ENCODE measurements at regions of chr1 and their contacts with region 1.

Region 1: GRCh38 chr1:20786253-20787028 is 666 bp downstream of the HP1BP3 start:
- DNase-seq: peak; percentile 89 to 98 (median 95)
- ATAC-seq: peak; percentile 73
- H3K4me3 ChIP-seq: peak overlapping the region; percentile 86 to 95
- H3K4me3 Mint-ChIP-seq: peak overlapping the region; percentile 99
- H3K27ac ChIP-seq: peak overlapping the region; percentile 81 to 88
- H3K27ac Mint-ChIP-seq: peak overlapping the region; percentile 98
- H3K4me1 ChIP-seq: peaks cover 32% of the 10 kb centered on the region
- H3K4me1 Mint-ChIP-seq: peaks cover 38% of the 10 kb centered on the region
- H3K27me3 ChIP-seq: no peaks in the 10 kb centered on the region
- H3K27me3 Mint-ChIP-seq: no peaks in the 10 kb centered on the region
- CTCF ChIP-seq: no peak

Region 2: DNA sequence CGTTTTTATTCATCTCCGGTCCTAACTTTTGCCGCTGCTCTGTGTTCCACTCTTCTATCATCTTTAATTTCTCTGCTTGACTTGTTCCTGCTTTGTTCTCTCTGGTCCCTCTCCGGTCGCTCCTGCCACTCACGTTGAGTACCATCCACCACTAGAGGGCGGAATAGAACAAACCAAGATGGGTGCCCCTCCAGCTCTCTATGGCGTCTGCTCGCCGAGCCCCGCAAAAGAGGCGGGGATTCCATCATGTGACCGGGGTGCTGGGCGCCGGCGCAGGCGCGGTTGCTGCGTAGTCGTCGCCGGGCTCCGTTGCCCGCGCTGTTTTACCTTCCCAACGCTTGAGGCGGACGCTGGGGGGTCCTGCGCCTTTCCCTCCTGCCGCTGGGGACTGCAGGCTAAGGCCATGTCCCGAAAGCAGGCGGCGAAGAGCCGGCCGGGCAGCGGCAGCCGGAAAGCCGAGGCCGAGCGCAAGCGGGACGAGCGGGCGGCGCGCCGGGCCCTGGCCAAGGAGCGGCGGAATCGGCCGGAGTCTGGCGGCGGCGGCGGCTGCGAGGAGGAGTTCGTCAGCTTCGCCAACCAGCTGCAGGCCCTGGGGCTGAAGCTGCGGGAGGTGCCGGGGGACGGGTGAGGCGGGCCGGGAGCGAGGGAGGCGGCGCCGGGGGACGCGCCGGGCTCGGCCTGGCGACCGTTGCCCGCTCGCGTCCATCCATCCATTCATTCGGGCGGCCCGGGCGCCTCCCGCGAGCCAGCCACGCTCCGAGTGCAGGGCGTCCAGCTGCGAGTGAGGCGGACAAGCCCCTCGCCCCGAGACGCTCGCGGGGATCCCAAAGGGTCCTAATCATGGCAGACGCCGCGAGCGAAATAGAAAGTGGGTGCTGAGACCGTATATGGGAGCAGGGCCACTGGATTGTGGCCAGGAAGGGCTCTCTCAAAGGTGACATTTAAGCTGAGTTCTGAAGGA is 904.0 kb before region 1 on chr1 and contains the start of gene OTUD3:
- CTCF ChIA-PET with region 1: no interaction called
- POLR2A ChIA-PET with region 1: no interaction called
- intact Hi-C with region 1: loop called in 1 of 2 experiments (anchors 10 kb)
- DNase-seq: peak; percentile 89 to 99 (median 95)
- ATAC-seq: peak; percentile 97
- H3K4me3 ChIP-seq: peak within 1 kb of the TSS; percentile 71 to 88
- H3K4me3 Mint-ChIP-seq: peak within 1 kb of the TSS; percentile 90
- H3K27ac ChIP-seq: peak within 1 kb of the TSS; percentile 67 to 77
- H3K27ac Mint-ChIP-seq: peak within 1 kb of the TSS; percentile 61
- H3K4me1 ChIP-seq: peaks cover 18% of the 10 kb centered on the region
- H3K4me1 Mint-ChIP-seq: peaks cover 43% of the 10 kb centered on the region
- H3K27me3 ChIP-seq: no peaks in the 10 kb centered on the region
- H3K27me3 Mint-ChIP-seq: no peaks in the 10 kb centered on the region
- CTCF ChIP-seq: peak; percentile 90
- total RNA-seq, gene OTUD3: 16.5 to 17.3 TPM

Region 3: DNA sequence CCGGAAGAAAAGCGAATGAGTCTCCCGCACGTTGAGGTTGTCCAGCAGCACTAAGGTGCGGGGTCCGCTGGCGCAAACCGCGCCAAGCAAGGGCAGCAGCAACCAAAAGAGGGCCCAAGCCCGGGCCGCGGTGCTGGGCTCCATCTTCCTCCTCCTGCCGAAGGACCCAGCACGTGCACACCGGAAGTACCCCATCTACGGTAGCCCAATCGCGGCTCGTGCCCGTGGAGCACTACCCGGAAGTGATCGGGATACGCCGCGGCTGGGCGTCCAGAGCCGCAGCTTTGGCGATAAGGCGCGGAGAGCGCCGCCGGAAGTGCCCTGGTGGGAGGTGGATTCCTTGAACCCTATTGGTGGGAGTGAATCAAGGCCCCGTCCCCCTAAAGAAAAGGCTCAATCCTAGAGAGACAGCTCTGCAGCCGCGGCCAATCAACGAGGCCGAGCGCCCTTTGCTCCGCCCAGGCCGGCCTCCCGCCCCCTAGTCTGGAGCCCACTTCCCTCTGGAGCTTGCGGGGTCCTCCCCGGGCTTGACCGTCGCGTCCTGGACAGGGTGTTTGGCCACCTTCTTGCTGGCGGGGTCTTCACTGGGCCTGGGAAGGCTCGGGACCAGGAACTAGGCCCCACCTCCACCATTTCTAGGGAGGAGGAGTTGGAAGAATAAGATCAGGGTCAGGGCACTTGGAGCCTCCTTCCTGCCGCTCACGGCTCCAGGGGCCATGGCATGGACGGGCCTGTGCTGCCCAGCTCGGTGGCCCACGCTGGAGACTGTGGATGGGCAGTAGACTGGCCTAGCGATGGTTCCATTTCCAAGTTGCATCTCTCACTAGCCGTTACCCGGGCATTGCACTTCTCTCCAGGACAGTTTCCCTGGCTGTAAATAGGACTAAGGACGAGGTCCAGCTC is 125.0 kb before region 1 on chr1 and contains the start of gene DDOST:
- CTCF ChIA-PET with region 1: no interaction called
- POLR2A ChIA-PET with region 1: no interaction called
- intact Hi-C with region 1: loop called (anchors 1 to 5 kb)
- DNase-seq: peak; percentile 86 to 98 (median 94)
- ATAC-seq: peak; percentile 94
- H3K4me3 ChIP-seq: peak within 1 kb of the TSS; percentile 85 to 95
- H3K4me3 Mint-ChIP-seq: peak within 1 kb of the TSS; percentile 98
- H3K27ac ChIP-seq: peak within 1 kb of the TSS; percentile 81 to 87
- H3K27ac Mint-ChIP-seq: peak within 1 kb of the TSS; percentile 98
- H3K4me1 ChIP-seq: peaks cover 28% of the 10 kb centered on the region
- H3K4me1 Mint-ChIP-seq: peaks cover 52% of the 10 kb centered on the region
- H3K27me3 ChIP-seq: no peaks in the 10 kb centered on the region
- H3K27me3 Mint-ChIP-seq: no peaks in the 10 kb centered on the region
- CTCF ChIP-seq: peak; percentile 27
- total RNA-seq, gene DDOST: 97.5 to 114 TPM

Region 4: DNA sequence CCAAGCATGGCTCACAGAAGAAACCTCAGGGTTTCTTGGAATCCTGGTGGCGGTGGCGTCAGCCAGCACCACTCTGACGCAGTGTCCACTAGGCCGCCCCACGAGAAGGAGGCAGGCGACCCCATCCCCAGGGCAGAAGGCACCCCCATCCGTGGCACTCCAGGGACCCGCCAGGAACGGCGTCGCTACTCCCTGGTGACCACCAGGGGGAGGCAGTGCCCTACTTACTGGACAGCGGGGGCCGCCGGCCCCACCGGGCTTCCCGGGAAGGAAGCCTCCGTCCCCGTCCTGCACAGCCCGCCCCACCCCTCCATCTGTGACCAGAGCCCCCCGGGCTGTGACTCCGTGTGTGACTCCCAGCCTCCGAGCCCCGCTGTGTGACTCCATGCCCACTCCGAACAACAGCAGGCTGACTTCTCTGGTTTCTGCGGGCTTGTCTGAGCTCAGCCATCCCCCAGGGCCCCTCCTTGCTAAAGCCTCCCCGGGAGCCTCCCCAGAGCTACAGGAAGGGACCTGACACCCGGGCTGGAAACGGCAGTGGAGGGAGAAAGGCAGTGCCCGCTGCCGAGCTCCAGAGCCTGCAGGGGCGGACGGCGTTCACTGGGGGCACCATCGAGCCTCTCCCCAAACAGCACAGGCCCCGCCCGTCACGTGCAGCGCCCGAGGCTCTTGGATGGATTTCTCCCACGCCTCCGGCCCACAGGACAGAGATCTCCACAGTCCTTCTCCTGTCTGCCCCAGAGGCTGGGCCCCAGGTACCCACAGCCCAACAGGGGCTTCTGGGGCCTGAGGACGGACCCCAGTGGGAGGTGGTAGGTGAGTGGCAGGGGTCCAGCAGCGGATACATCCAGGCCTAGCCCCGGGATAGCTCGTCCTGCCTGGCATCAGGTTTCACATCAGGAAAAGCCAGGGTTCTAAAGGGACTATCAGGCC is 89.8 kb before region 1 on chr1:
- CTCF ChIA-PET with region 1: no interaction called
- POLR2A ChIA-PET with region 1: no interaction called
- intact Hi-C with region 1: no loop called
- DNase-seq: peak; percentile 54 to 81 (median 73)
- ATAC-seq: peak; percentile 93
- H3K4me3 ChIP-seq: peak overlapping the region; percentile 92 to 98
- H3K4me3 Mint-ChIP-seq: peak overlapping the region; percentile 89
- H3K27ac ChIP-seq: peak overlapping the region in 1 of 2 experiments; percentile 31
- H3K27ac Mint-ChIP-seq: no peak overlapping the region
- H3K4me1 ChIP-seq: peaks cover 7% of the 10 kb centered on the region
- H3K4me1 Mint-ChIP-seq: peaks cover 2% of the 10 kb centered on the region
- H3K27me3 ChIP-seq: no peaks in the 10 kb centered on the region
- H3K27me3 Mint-ChIP-seq: peaks cover 2% of the 10 kb centered on the region
- CTCF ChIP-seq: peak; percentile 98

Region 5: DNA sequence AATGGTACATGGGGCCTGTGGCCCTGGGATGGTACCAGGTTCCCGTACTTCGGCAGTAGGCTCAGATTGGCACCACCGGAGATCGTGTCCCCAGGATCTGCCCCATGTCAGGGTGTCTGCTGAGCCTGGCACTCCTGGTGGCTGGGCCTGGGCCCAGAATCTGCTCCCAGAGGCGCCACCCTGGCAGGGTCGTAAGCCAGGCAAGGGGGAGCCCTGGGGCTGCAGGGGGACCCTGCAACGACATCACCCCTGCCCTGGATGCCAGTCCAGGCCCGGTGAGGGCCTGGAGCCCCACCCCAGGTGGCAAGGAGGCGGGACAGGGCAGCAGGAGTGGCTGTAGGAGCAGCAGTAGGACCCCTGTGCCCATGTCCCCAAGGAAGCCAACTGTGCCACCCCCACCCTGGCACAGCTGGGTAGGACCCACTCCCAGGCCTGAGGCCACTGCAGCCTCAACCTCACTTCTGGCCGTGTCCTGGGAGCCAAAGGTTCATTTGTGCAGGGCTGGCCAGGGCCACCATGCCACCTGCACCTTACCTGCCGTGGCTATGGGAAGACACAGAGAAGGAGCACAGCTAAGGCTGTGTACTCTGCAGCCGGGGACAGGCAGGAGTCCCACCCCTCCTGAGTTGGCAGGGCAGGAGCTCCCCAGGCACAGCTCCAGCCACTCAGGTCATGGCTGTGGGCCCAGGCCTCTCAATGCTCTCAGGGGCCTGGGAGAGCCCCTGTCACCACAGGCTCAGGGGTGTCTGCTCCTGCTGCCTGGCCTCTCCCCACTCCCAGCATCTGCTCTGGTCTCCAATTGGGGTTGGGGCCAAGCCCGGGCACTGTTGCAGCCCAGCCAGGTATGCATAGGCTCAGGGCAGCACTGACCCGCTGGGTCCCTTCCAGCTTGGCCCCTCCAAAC is 248.5 kb after region 1 on chr1:
- CTCF ChIA-PET with region 1: no interaction called
- POLR2A ChIA-PET with region 1: no interaction called
- intact Hi-C with region 1: no loop called
- DNase-seq: no peak
- ATAC-seq: no peak
- H3K4me3 ChIP-seq: no peak overlapping the region
- H3K4me3 Mint-ChIP-seq: no peak overlapping the region
- H3K27ac ChIP-seq: no peak overlapping the region
- H3K27ac Mint-ChIP-seq: no peak overlapping the region
- H3K4me1 ChIP-seq: no peaks in the 10 kb centered on the region
- H3K4me1 Mint-ChIP-seq: peaks cover 4% of the 10 kb centered on the region
- H3K27me3 ChIP-seq: no peaks in the 10 kb centered on the region
- H3K27me3 Mint-ChIP-seq: no peaks in the 10 kb centered on the region
- CTCF ChIP-seq: no peak

Region 6: DNA sequence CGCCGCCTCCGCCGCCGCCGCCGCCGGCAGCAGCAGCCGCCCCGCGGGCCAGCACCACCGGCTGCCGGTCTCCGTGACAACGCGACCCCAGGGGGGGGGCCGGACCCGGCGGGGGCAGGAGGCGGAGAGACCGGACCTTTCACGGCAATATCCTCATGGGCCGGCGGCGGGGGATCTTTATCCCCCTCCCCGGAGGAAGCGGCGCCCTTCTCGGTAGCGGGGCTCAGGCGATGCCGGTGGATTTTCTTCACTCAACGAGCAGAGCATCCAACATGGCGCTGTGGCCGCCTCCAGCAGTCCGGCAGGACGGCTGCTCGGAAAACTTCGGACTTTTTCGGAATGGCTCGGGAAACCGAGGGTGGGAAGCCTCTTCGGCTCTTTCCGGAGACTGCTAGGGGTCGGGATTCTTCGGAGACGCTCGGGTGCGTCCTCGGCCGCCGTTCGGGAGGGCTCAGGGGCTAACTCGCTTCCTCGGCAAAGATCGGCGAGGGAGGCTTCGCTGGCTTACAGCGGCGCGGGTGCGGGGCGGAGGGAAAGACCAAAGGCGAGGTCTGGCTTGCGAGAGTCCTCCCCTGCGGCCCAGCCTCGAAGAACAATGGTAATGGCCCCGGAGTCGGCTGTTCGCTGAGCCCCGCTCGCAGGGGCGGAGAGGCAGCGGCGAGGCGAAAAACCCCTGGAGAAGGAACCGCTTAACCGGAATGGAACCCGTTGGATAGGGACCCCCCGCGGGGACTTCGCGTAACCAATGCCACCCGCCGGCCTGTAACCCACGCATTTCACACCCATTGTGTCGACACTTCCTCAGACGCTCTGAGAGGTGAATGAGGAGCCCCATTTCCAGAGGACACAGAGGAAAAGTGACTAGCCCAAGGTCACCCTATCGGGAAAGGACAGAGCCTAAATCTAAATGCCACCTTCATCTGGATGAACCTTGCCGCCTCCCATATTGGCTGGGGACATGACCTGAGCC is 390.4 kb after region 1 on chr1 and contains the start of gene EIF4G3:
- CTCF ChIA-PET with region 1: interaction called, 4 read pairs
- POLR2A ChIA-PET with region 1: interaction called, 3 read pairs
- intact Hi-C with region 1: loop called (anchors 2 kb)
- DNase-seq: peak; percentile 97 to 100 (median 99)
- ATAC-seq: peak; percentile 95
- H3K4me3 ChIP-seq: peak within 1 kb of the TSS; percentile 77 to 86
- H3K4me3 Mint-ChIP-seq: peak within 1 kb of the TSS; percentile 92
- H3K27ac ChIP-seq: peak within 1 kb of the TSS; percentile 78 to 88
- H3K27ac Mint-ChIP-seq: peak within 1 kb of the TSS; percentile 91
- H3K4me1 ChIP-seq: peaks cover 18% of the 10 kb centered on the region
- H3K4me1 Mint-ChIP-seq: peaks cover 24% of the 10 kb centered on the region
- H3K27me3 ChIP-seq: no peaks in the 10 kb centered on the region
- H3K27me3 Mint-ChIP-seq: no peaks in the 10 kb centered on the region
- CTCF ChIP-seq: no peak
- total RNA-seq, gene EIF4G3: 19.6 to 19.8 TPM

Region 7: GRCh38 chr1:21659099-21659923 is 872.9 kb after region 1 on chr1:
- CTCF ChIA-PET with region 1: no interaction called
- POLR2A ChIA-PET with region 1: no interaction called
- intact Hi-C with region 1: loop called in 1 of 2 experiments (anchors 5 kb)
- DNase-seq: peak; percentile 65 to 90 (median 84)
- ATAC-seq: peak; percentile 99
- H3K4me3 ChIP-seq: peak overlapping the region; percentile 8 to 10
- H3K4me3 Mint-ChIP-seq: peak overlapping the region; percentile 32
- H3K27ac ChIP-seq: no peak overlapping the region
- H3K27ac Mint-ChIP-seq: no peak overlapping the region
- H3K4me1 ChIP-seq: peaks cover 8% of the 10 kb centered on the region
- H3K4me1 Mint-ChIP-seq: peaks cover 5% of the 10 kb centered on the region
- H3K27me3 ChIP-seq: peaks cover 5 to 10% of the 10 kb centered on the region in 2 experiments
- H3K27me3 Mint-ChIP-seq: peaks cover 17% of the 10 kb centered on the region
- CTCF ChIP-seq: peak; percentile 93

Measured in CD8-positive, alpha-beta T cell (primary cell).